PC-3 (cell line): ENCODE measurements at regions of chr15 and their contacts with region 1.

Region 1: DNA sequence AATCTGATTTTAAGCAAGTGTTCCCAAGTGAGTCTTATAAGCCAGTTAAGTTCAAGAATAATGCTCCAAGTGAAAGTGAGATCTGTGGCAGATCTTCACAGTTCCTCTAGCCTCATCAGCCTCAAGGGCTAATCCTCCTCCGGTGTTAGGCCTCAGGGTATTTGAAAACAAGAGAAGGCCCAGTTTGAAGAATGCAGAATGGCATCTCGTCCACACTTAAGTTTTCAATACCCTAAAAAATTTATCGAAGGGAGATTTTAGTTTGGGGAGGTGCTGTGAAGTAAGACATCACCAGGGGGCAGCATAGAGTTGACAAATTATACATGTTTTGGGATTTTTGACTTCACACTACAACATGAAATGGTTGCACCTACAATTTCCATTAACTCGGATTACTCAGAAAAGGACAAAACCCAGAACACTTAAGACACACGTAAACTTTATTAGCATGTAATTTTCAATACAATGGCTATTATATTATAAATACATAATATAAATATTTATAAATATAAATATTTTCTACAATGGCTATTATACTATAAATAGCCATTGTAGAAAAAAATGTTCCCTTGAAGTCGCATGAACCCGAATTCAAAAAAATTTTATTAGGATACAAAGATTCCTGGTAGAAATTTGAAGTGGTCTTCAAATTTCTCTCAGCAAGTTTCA is 2.3 kb upstream of the TMEM266 start:
- DNase-seq: peak; percentile 66
- ATAC-seq: no peak
- H3K4me3 ChIP-seq: peak overlapping the region; percentile 54
- H3K27ac ChIP-seq: no peak overlapping the region
- H3K4me1 ChIP-seq: peaks cover 7% of the 10 kb centered on the region; the same call in 1 of the 2 replicates
- H3K27me3 ChIP-seq: peaks cover 33% of the 10 kb centered on the region
- CTCF ChIP-seq: peak; percentile 75

Region 2: GRCh38 chr15:75966073-75966472 is 91.4 kb before region 1 on chr15:
- CTCF ChIA-PET with region 1: interaction called, 10 read pairs
- POLR2A ChIA-PET with region 1: no interaction called
- intact Hi-C with region 1: no loop called
- DNase-seq: peak; percentile 75
- ATAC-seq: peak; percentile 43
- H3K4me3 ChIP-seq: no peak overlapping the region
- H3K27ac ChIP-seq: 0 out of 2 replicates have a peak overlapping the region, but pooled peaks have one; percentile 11
- H3K4me1 ChIP-seq: peaks cover 15% of the 10 kb centered on the region
- H3K27me3 ChIP-seq: no peaks in the 10 kb centered on the region
- CTCF ChIP-seq: no peak

Region 3: GRCh38 chr15:76139368-76140073 is 82.1 kb after region 1 on chr15:
- CTCF ChIA-PET with region 1: interaction called, 8 read pairs
- POLR2A ChIA-PET with region 1: no interaction called
- intact Hi-C with region 1: loop called (anchors 1 kb)
- DNase-seq: peak; percentile 86
- ATAC-seq: peak; percentile 80
- H3K4me3 ChIP-seq: no peak overlapping the region
- H3K27ac ChIP-seq: no peak overlapping the region
- H3K4me1 ChIP-seq: no peaks in the 10 kb centered on the region
- H3K27me3 ChIP-seq: 0 out of 2 replicates have a peak, but pooled peaks cover 25% of the 10 kb centered on the region
- CTCF ChIP-seq: peak; percentile 89